ENCODE measurements at regions of chr5 and their contacts with region 1.

Region 1: GRCh38 chr5:172188033-172188892 is at the start of gene STK10:
- DNase-seq: peak; percentile 72
- ATAC-seq: peak; percentile 94
- H3K4me3 ChIP-seq: peak within 1 kb of the TSS; percentile 85 to 94
- H3K27ac ChIP-seq: peak within 1 kb of the TSS; percentile 81
- H3K4me1 ChIP-seq: peaks cover 14% of the 10 kb centered on the region; the same call in 1 of the 2 replicates
- H3K27me3 ChIP-seq: no peaks in the 10 kb centered on the region
- CTCF ChIP-seq: peak; percentile 95
- total RNA-seq, gene STK10: 34.9 TPM

Region 2: GRCh38 chr5:171640480-171640879 is 547.8 kb before region 1 on chr5:
- CTCF ChIA-PET with region 1: no interaction called
- POLR2A ChIA-PET with region 1: no interaction called
- in situ Hi-C with region 1: no loop called
- intact Hi-C with region 1: no loop called
- DNase-seq: no peak
- ATAC-seq: no peak
- H3K4me3 ChIP-seq: no peak overlapping the region
- H3K27ac ChIP-seq: no peak overlapping the region
- H3K4me1 ChIP-seq: no peaks in the 10 kb centered on the region
- H3K27me3 ChIP-seq: 0 out of 2 replicates have a peak, but pooled peaks cover 2% of the 10 kb centered on the region
- CTCF ChIP-seq: no peak

Region 3: GRCh38 chr5:172015346-172015745 is 172.9 kb before region 1 on chr5:
- CTCF ChIA-PET with region 1: interaction called, 15 read pairs
- POLR2A ChIA-PET with region 1: no interaction called
- in situ Hi-C with region 1: no loop called
- intact Hi-C with region 1: no loop called
- DNase-seq: no peak
- ATAC-seq: no peak
- H3K4me3 ChIP-seq: no peak overlapping the region
- H3K27ac ChIP-seq: no peak overlapping the region
- H3K4me1 ChIP-seq: peaks cover under 1% of the 10 kb centered on the region; the same call in 1 of the 2 replicates
- H3K27me3 ChIP-seq: no peaks in the 10 kb centered on the region
- CTCF ChIP-seq: no peak

Region 4: GRCh38 chr5:172106511-172107356 is 81.5 kb before region 1 on chr5:
- CTCF ChIA-PET with region 1: interaction called, 10 read pairs
- POLR2A ChIA-PET with region 1: interaction called, 3 read pairs
- in situ Hi-C with region 1: no loop called
- intact Hi-C with region 1: loop called (anchors 2 kb)
- DNase-seq: peak; percentile 33
- ATAC-seq: peak; percentile 55; the same call in 1 of the 2 replicates
- H3K4me3 ChIP-seq: peak overlapping the region in 1 of 2 experiments; percentile 24; a peak in 1 of 4 replicates
- H3K27ac ChIP-seq: peak overlapping the region; percentile 20; the same call in 1 of the 2 replicates
- H3K4me1 ChIP-seq: peaks cover 16% of the 10 kb centered on the region
- H3K27me3 ChIP-seq: no peaks in the 10 kb centered on the region
- CTCF ChIP-seq: peak; percentile 99

Region 5: GRCh38 chr5:172113036-172113435 is 75.2 kb before region 1 on chr5:
- CTCF ChIA-PET with region 1: interaction called, 10 read pairs
- POLR2A ChIA-PET with region 1: no interaction called
- in situ Hi-C with region 1: no loop called
- intact Hi-C with region 1: loop called (anchors 2 kb)
- DNase-seq: no peak
- ATAC-seq: no peak
- H3K4me3 ChIP-seq: no peak overlapping the region
- H3K27ac ChIP-seq: no peak overlapping the region
- H3K4me1 ChIP-seq: peaks cover 11% of the 10 kb centered on the region
- H3K27me3 ChIP-seq: no peaks in the 10 kb centered on the region
- CTCF ChIP-seq: no peak

Region 6: DNA sequence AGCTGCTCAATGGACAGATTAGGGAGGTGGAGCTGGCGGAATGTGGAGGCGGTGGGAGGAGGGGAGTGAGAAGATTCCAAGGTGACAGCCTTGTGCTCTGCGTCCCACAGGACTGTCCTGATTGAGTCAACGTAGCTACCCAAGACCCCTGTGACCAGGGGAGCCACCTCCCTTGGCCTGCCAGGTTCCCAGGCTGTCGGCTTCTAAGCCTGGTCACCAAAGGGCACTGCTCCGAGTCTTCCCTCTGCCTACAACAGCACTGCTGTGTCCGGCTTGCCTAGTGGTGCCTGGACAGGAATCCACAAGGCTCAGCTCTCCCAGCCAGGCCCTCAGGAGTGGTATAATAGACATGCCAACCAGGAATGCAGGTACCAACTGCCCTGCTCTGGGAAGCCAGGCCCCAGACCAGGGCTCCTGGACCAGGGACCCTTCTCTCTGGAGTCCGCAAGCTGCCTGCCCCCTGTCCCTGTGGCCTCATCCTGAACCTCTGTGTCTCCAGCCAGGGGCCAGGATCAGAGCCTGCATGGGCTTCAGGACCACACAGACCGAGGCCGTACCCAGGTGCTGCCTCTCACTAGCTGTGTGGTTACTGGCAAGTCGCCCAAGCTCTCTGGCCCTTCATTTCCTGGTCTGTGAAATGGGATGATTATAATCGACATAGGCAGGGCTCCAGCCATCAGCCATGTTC is 68.1 kb before region 1 on chr5:
- CTCF ChIA-PET with region 1: interaction called, 10 read pairs
- POLR2A ChIA-PET with region 1: no interaction called
- in situ Hi-C with region 1: no loop called
- intact Hi-C with region 1: no loop called
- DNase-seq: no peak
- ATAC-seq: 0 out of 2 replicates have a peak, but pooled peaks have one; percentile 41
- H3K4me3 ChIP-seq: no peak overlapping the region
- H3K27ac ChIP-seq: no peak overlapping the region
- H3K4me1 ChIP-seq: no peaks in the 10 kb centered on the region
- H3K27me3 ChIP-seq: no peaks in the 10 kb centered on the region
- CTCF ChIP-seq: no peak

Measured in Panc1 (cell line).